Activated CD4-positive, alpha-beta T cell treated with anti-CD3 and anti-CD28 coated beads for 36 hours (primary cell): ENCODE measurements at regions of chr3 and their contacts with region 1.

Region 1: DNA sequence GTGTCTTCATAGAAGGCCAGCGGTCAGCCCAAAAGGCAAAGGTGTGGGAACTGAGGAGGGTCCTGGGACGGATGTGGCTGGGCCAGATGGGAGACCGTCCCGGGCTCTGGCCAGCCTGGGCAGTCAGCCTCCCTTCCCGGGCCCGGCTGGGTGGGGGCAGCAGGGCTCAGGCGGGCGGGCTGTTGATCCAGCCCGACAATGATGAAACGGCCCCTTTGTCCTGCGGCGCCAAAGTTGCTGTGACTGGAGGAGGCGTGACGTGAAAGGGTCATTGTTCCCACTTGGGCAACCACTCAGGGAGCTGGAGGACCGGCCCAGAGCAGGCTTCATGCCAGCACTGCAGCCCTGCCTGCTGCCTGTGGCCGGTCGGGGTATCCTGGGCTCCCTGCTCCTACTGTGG is 16.5 kb downstream of the DUSP7 start:
- DNase-seq: no peak
- ATAC-seq: no peak
- H3K4me3 Mint-ChIP-seq: no peak overlapping the region
- H3K27ac Mint-ChIP-seq: no peak overlapping the region
- H3K4me1 Mint-ChIP-seq: no peaks in the 10 kb centered on the region
- H3K27me3 Mint-ChIP-seq: no peaks in the 10 kb centered on the region

Region 2: GRCh38 chr3:52385157-52385556 is 345.3 kb after region 1 on chr3:
- CTCF ChIA-PET with region 1: interaction called, 3 read pairs
- POLR2A ChIA-PET with region 1: no interaction called
- intact Hi-C with region 1: loop called in 1 of 2 experiments (anchors 10 kb)
- DNase-seq: peak; percentile 67
- ATAC-seq: peak; percentile 77
- H3K4me3 Mint-ChIP-seq: no peak overlapping the region
- H3K27ac Mint-ChIP-seq: no peak overlapping the region
- H3K4me1 Mint-ChIP-seq: no peaks in the 10 kb centered on the region
- H3K27me3 Mint-ChIP-seq: no peaks in the 10 kb centered on the region